Activated CD8-positive, alpha-beta memory T cell treated with anti-CD3 and anti-CD28 coated beads, Interleukin-2, amount 10 ng/mL, durations not matched to agents 7 days and 5 days (primary cell): ENCODE measurements at regions of chr5 and their contacts with region 1.

Region 1: DNA sequence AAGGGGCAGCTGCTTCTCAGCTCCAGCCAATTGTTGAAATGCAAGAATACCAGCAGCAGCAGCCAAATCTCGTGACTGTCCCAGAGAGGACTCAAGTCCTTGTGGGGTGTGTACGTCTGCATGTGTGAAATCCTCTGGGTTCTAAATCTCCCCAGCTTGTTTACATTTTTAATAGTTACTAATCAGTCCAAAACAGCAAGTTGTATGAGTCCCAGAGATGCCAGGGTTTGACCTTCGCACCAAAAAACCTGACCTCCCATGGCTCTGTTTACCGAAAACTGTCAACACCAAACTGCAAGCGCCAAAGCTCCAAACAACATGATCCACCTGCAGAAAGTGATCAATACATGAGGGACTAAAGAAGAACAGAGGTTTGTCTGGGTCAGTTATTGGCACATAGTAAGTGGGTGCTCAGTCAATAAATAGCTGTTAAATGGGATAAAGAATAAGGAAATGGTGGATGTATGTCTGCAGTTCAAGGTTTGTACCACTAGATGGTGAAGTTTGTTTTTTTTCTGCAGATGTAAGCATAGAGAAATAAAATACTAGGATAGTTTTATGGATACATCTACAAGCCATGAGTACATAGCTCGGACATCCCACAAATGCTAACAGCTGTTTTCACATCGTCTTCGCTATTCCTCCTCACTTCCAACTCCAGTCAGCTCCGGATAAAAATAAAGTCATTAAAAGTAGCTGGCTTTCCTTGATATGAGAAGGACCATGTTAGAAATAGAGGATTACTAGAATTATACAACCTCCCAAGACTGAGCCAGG is 85.3 kb upstream of the ADRB2 start:
- DNase-seq: no peak
- ATAC-seq: no peak
- H3K4me3 Mint-ChIP-seq: no peak overlapping the region
- H3K27ac Mint-ChIP-seq: no peak overlapping the region
- H3K4me1 Mint-ChIP-seq: peaks cover 3% of the 10 kb centered on the region
- H3K27me3 Mint-ChIP-seq: peaks cover 36% of the 10 kb centered on the region

Region 2: GRCh38 chr5:148374692-148375360 is 366.3 kb before region 1 on chr5:
- CTCF ChIA-PET with region 1: no interaction called
- DNase-seq: peak; percentile 44
- ATAC-seq: peak; percentile 61
- H3K4me3 Mint-ChIP-seq: no peak overlapping the region
- H3K27ac Mint-ChIP-seq: no peak overlapping the region
- H3K4me1 Mint-ChIP-seq: peaks cover 7% of the 10 kb centered on the region
- H3K27me3 Mint-ChIP-seq: no peaks in the 10 kb centered on the region

Region 3: DNA sequence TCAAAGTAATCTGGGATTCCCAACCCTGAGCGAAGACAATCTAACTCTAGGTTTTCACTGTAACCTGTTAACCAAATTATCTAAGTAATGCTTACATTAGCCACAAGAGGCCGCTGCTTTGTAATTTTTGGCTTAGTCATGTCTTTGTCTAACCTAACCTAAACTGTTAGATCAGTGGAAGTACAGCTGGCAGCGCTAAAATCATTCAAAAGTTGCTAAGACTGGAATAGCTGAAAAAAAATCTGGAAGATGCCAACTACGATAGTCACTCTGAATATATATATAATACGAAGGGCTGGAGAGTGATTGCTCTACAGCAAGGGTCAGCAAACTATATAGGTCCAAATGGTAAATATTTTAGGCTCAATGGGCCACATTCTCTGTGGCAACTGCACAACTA is 297.2 kb before region 1 on chr5:
- CTCF ChIA-PET with region 1: no interaction called
- DNase-seq: peak; percentile 52
- ATAC-seq: peak; percentile 74
- H3K4me3 Mint-ChIP-seq: no peak overlapping the region
- H3K27ac Mint-ChIP-seq: no peak overlapping the region
- H3K4me1 Mint-ChIP-seq: no peaks in the 10 kb centered on the region
- H3K27me3 Mint-ChIP-seq: no peaks in the 10 kb centered on the region

Region 4: GRCh38 chr5:148711961-148712360 is 29.2 kb before region 1 on chr5:
- CTCF ChIA-PET with region 1: no interaction called
- DNase-seq: no peak
- ATAC-seq: no peak
- H3K4me3 Mint-ChIP-seq: no peak overlapping the region
- H3K27ac Mint-ChIP-seq: no peak overlapping the region
- H3K4me1 Mint-ChIP-seq: peaks cover 26% of the 10 kb centered on the region
- H3K27me3 Mint-ChIP-seq: no peaks in the 10 kb centered on the region

Region 5: GRCh38 chr5:148998174-148998797 is 257.1 kb after region 1 on chr5:
- CTCF ChIA-PET with region 1: interaction called, 17 read pairs
- DNase-seq: peak; percentile 49
- ATAC-seq: peak; percentile 69
- H3K4me3 Mint-ChIP-seq: no peak overlapping the region
- H3K27ac Mint-ChIP-seq: no peak overlapping the region
- H3K4me1 Mint-ChIP-seq: no peaks in the 10 kb centered on the region
- H3K27me3 Mint-ChIP-seq: peaks cover 37% of the 10 kb centered on the region

Region 6: GRCh38 chr5:149011074-149011476 is 269.9 kb after region 1 on chr5:
- CTCF ChIA-PET with region 1: interaction called, 10 read pairs
- DNase-seq: no peak
- ATAC-seq: no peak
- H3K4me3 Mint-ChIP-seq: no peak overlapping the region
- H3K27ac Mint-ChIP-seq: no peak overlapping the region
- H3K4me1 Mint-ChIP-seq: peaks cover 2% of the 10 kb centered on the region
- H3K27me3 Mint-ChIP-seq: peaks cover 9% of the 10 kb centered on the region

Region 7: DNA sequence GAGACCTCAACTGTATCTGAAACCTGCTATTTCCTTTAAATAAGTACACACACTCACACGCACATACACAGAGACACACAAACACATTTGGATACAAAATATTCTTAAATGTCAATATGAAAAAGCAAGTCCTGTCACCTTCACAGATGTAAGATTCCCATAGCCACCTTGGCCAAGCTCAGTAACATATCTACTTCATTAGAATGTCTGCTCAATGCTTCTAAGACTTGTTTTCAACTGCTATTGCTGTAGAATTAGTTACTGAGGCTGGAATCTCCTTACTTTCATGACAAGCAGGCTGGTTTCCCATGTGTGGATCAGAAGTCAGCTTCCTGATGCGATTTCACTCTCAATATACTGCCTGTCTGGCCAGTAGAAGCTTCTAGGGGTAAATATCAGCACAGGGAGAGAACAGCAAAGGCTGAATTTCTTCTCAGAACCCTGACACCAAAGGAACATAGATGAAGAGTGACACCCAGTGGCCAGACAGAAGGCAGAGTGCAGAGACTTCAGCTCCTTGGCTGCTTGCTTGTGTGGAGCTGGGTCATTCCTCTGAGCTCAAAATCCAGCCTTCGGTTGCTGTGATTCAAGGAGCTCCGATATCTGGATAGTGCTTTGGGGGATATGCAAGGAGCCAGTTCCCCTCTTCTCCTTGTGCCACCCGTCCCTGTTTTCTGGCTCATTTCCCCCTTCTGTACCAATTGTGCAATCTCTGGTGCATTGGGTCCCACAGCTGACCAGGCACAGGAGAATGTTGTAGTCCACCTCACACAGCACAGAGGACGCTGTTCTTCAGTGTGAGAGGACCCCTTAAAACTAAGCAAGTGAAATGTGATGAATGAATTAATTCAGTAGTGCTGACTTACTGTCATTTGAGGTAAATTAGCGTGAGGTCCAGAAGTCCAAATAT is 373.5 kb after region 1 on chr5:
- CTCF ChIA-PET with region 1: interaction called, 11 read pairs
- DNase-seq: peak; percentile 61
- ATAC-seq: peak; percentile 86
- H3K4me3 Mint-ChIP-seq: no peak overlapping the region
- H3K27ac Mint-ChIP-seq: no peak overlapping the region
- H3K4me1 Mint-ChIP-seq: peaks cover 11% of the 10 kb centered on the region
- H3K27me3 Mint-ChIP-seq: peaks cover 46% of the 10 kb centered on the region